HCT116 (cell line): ENCODE measurements at regions of chr4 and their contacts with region 1.

Region 1: DNA sequence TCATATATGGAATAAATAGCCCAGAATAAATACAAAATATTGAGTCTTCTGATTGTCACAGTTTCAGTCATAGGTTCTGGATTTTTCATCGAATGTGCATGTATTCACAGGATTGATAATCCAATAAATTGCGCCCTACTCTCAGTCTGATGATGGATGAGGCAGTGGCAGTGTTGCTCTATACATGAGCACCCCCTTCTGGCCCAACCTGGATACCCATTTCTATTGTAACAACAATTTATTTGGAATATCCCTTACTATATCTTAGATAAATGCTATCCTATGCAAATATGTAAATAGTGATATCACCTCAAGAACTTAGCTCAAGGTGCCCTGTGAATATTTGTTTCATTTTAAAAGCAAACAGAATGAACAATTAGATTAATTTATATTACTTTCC is 733.7 kb upstream of the PABPC4L start:
- DNase-seq: no peak
- ATAC-seq: 0 out of 2 replicates have a peak, but pooled peaks have one; percentile 54
- H3K4me3 ChIP-seq: no peak overlapping the region
- H3K27ac ChIP-seq: no peak overlapping the region
- H3K4me1 ChIP-seq: no peaks in the 10 kb centered on the region
- H3K27me3 ChIP-seq: no peaks in the 10 kb centered on the region
- CTCF ChIP-seq: peak; percentile 19 to 62 (median 51); a peak in 5 of 6 replicates
- POLR2A ChIP-seq: no peak
- RAD21 ChIP-seq: peak; percentile 62

Region 2: DNA sequence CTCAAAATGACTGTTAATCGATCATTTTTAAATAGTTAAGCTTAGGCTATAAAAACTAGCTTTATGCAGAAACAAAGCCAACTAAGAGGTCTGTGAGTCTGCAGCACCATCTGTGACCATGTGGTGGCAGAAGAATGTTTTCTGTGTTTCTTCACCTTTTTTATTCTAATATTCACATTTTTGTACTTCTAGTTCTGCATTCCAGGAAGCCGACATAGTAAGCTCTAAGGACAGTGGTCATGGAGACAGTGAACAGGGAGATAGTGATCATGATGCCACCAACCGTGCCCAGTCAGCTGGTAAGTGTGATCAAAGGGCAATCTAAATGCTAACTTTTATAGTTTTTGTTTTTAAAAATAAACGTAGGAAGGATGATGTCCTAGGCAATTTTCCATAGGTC is 1780.6 kb before region 1 on chr4:
- CTCF ChIA-PET with region 1: interaction called, 13 read pairs
- POLR2A ChIA-PET with region 1: no interaction called
- RAD21 ChIA-PET with region 1: no interaction called
- intact Hi-C with region 1: loop called (anchors 5 kb)
- DNase-seq: peak; percentile 23
- ATAC-seq: peak; percentile 57
- H3K4me3 ChIP-seq: no peak overlapping the region
- H3K27ac ChIP-seq: no peak overlapping the region
- H3K4me1 ChIP-seq: no peaks in the 10 kb centered on the region
- H3K27me3 ChIP-seq: no peaks in the 10 kb centered on the region
- CTCF ChIP-seq: peak; percentile 23 to 67 (median 62); a peak in 5 of 6 replicates
- POLR2A ChIP-seq: no peak
- RAD21 ChIP-seq: peak; percentile 67

Region 3: GRCh38 chr4:133237705-133238104 is 1697.6 kb before region 1 on chr4:
- CTCF ChIA-PET with region 1: no interaction called
- POLR2A ChIA-PET with region 1: no interaction called
- RAD21 ChIA-PET with region 1: no interaction called
- intact Hi-C with region 1: no loop called
- DNase-seq: no peak
- ATAC-seq: no peak
- H3K4me3 ChIP-seq: no peak overlapping the region
- H3K27ac ChIP-seq: no peak overlapping the region
- H3K4me1 ChIP-seq: no peaks in the 10 kb centered on the region
- H3K27me3 ChIP-seq: no peaks in the 10 kb centered on the region
- CTCF ChIP-seq: no peak
- POLR2A ChIP-seq: no peak
- RAD21 ChIP-seq: peak; percentile 18; the same call in 1 of the 2 replicates

Region 4: DNA sequence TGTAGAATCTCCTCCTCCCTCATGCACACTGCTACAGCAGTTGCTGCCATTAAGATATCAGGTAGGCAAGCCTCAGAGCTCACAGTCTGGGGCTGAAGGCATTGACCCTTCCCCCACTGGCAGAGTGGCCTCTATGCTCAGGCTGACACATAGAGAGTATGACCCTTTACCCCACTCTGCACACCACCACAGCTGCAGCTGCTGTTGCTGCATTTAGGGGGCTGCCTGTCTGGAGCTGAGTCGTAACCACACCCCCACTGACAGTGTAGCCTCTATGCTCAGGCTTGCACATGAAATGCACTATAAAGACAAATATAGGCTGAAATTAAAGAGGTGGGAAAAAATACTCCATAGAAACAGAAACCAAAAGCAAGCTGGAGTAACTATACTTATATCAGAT is 444.5 kb before region 1 on chr4:
- CTCF ChIA-PET with region 1: no interaction called
- POLR2A ChIA-PET with region 1: no interaction called
- RAD21 ChIA-PET with region 1: no interaction called
- intact Hi-C with region 1: no loop called
- DNase-seq: no peak
- ATAC-seq: no peak
- H3K4me3 ChIP-seq: no peak overlapping the region
- H3K27ac ChIP-seq: no peak overlapping the region
- H3K4me1 ChIP-seq: no peaks in the 10 kb centered on the region
- H3K27me3 ChIP-seq: no peaks in the 10 kb centered on the region
- CTCF ChIP-seq: no peak
- POLR2A ChIP-seq: no peak
- RAD21 ChIP-seq: no peak

Region 5: DNA sequence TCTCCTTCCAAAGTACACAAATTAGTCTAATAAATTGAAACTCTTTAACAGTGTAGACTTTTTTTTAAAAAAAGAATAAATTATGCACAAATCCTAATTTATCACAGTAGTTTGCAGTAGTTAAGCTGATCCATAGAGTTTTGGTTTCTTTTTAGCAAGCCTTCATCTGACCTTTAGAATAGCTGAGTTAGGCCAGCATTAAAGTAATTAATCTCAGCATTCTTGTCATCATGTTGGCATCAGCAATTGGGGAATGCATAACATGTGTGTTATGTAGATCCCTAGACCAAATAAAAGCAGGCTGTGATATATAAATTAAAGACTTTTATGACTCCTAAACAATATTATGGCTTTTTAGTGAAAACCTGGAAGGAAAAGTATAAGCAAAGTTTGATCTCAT is 307.3 kb before region 1 on chr4:
- CTCF ChIA-PET with region 1: no interaction called
- POLR2A ChIA-PET with region 1: no interaction called
- RAD21 ChIA-PET with region 1: no interaction called
- intact Hi-C with region 1: no loop called
- DNase-seq: no peak
- ATAC-seq: no peak
- H3K4me3 ChIP-seq: no peak overlapping the region
- H3K27ac ChIP-seq: no peak overlapping the region
- H3K4me1 ChIP-seq: no peaks in the 10 kb centered on the region
- H3K27me3 ChIP-seq: no peaks in the 10 kb centered on the region
- CTCF ChIP-seq: no peak
- POLR2A ChIP-seq: no peak
- RAD21 ChIP-seq: no peak

Region 6: GRCh38 chr4:135201081-135201480 is 265.8 kb after region 1 on chr4:
- CTCF ChIA-PET with region 1: no interaction called
- POLR2A ChIA-PET with region 1: no interaction called
- RAD21 ChIA-PET with region 1: no interaction called
- intact Hi-C with region 1: no loop called
- DNase-seq: no peak
- ATAC-seq: no peak
- H3K4me3 ChIP-seq: no peak overlapping the region
- H3K27ac ChIP-seq: no peak overlapping the region
- H3K4me1 ChIP-seq: no peaks in the 10 kb centered on the region
- H3K27me3 ChIP-seq: no peaks in the 10 kb centered on the region
- CTCF ChIP-seq: no peak
- POLR2A ChIP-seq: no peak
- RAD21 ChIP-seq: no peak